ENCODE measurements at regions of chr1 and their contacts with region 1.

Region 1: DNA sequence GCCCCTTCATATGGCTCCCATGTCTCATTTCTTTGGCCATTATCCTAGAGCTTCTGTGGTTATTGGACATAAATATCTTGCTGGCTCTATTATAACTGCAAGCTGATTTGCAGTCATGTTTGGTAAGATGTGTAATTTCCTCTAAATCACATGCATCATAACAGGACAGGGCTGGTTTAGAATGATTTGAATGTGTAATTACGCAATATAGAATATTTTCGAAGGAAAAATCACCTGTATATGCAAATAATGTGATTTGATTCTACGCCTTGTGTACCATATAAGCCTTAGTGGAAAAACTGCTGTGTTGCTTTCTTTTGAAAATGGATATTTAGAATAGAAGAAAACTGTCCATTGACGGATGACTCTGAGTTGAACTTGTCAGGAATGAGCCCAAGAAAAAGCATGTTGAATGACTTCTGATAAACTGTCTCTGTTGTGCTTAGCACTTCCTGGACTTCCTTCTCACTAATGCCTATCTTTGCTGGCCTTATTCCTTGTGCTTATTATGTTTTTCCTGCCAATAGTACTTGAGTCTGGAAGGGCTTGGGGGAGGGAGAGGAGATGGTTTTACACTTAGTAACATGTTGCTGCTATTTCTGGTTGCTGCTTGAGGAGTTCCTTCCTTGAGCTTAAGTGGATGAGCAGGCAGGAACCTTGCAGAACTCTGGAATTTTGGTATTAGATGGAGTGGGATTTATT is 6.5 kb downstream of the CACHD1 start:
- DNase-seq: no peak
- ATAC-seq: no peak
- H3K4me3 ChIP-seq: no peak overlapping the region
- H3K4me3 Mint-ChIP-seq: no peak overlapping the region
- H3K27ac ChIP-seq: no peak overlapping the region
- H3K27ac Mint-ChIP-seq: no peak overlapping the region
- H3K4me1 ChIP-seq: peaks cover 5% of the 10 kb centered on the region
- H3K4me1 Mint-ChIP-seq: peaks cover 42% of the 10 kb centered on the region
- H3K27me3 ChIP-seq: peaks cover 2 to 9% of the 10 kb centered on the region in 2 experiments
- H3K27me3 Mint-ChIP-seq: peaks cover 14% of the 10 kb centered on the region
- CTCF ChIP-seq: no peak

Region 2: GRCh38 chr1:64515427-64515826 is 39.0 kb after region 1 on chr1:
- CTCF ChIA-PET with region 1: interaction called, 3 read pairs
- POLR2A ChIA-PET with region 1: no interaction called
- intact Hi-C with region 1: loop called in 1 of 2 experiments (anchors 5 kb)
- DNase-seq: no peak
- ATAC-seq: no peak
- H3K4me3 ChIP-seq: no peak overlapping the region
- H3K4me3 Mint-ChIP-seq: no peak overlapping the region
- H3K27ac ChIP-seq: no peak overlapping the region
- H3K27ac Mint-ChIP-seq: no peak overlapping the region
- H3K4me1 ChIP-seq: no peaks in the 10 kb centered on the region
- H3K4me1 Mint-ChIP-seq: peaks cover 39% of the 10 kb centered on the region
- H3K27me3 ChIP-seq: no peaks in the 10 kb centered on the region
- H3K27me3 Mint-ChIP-seq: no peaks in the 10 kb centered on the region
- CTCF ChIP-seq: no peak